ENCODE measurements at regions of chr6 and their contacts with region 1.

Region 1: GRCh38 chr6:143236151-143236798 is 175.6 kb downstream of the AIG1 start:
- DNase-seq: no peak
- H3K4me3 ChIP-seq: no peak overlapping the region
- H3K27ac ChIP-seq: no peak overlapping the region
- H3K4me1 ChIP-seq: no peaks in the 10 kb centered on the region
- H3K27me3 ChIP-seq: no peaks in the 10 kb centered on the region
- CTCF ChIP-seq: no peak
- POLR2A ChIP-seq: no peak

Region 2: GRCh38 chr6:143258945-143259344 is 22.7 kb after region 1 on chr6:
- intact Hi-C with region 1: loop called (anchors 2 kb)
- DNase-seq: no peak
- H3K4me3 ChIP-seq: no peak overlapping the region
- H3K27ac ChIP-seq: no peak overlapping the region
- H3K4me1 ChIP-seq: no peaks in the 10 kb centered on the region
- H3K27me3 ChIP-seq: no peaks in the 10 kb centered on the region
- CTCF ChIP-seq: no peak
- POLR2A ChIP-seq: no peak

Measured in breast epithelium (tissue), 4 donors.